Dorsolateral prefrontal cortex (tissue), 120 donors: ENCODE measurements at regions of chr5 and their contacts with region 1.

Region 1: DNA sequence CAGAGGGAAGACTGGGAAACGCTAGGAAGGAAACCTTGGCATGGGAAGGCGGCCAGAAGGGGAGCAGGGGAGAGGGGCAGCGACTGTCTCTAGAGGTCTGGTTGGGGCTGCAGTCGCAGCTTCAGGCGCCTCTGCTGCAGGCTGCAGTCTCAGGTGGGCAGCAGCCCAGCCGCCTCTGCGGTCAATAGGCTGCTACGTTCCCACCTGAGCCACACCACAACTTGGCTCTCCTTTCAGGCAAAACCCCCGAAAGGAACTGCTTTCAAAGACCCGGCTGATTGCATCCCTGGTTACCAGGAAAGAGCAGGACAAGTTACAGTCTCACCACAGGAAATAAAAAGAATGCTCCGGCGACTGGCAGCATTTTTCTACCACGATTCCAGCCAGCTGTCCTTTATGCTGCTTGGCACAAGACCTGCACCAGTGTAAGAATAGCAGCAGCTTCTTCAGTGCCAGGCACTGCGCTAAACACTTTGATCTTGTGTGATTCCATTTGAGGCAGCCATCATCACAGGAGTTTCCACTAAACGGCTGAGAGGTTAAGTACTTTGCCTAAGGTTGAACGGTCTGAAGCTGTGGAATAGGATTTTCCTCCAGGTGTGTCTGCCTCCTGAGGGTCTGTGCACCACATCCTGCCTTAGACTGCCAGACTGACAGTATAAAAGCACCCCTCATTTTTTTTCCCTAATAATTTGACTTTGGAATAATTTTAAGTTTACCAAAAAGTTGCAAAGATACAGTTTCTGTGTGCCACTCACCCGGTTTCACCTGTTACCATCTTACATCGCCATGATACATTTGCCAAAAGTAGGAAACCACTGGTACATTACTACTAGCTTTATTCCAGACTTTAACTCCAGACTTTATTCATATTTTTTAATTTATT is 7.5 kb downstream of the RPS14 start:
- DNase-seq: peak in 6 of 10 donors; percentile 17 to 76 (median 68)
- H3K4me3 ChIP-seq: no peak overlapping the region
- H3K27ac ChIP-seq: peak overlapping the region; percentile 8 to 90 (median 78)
- H3K27me3 ChIP-seq: no peaks in the 10 kb centered on the region
- CTCF ChIP-seq: no peak

Region 2: DNA sequence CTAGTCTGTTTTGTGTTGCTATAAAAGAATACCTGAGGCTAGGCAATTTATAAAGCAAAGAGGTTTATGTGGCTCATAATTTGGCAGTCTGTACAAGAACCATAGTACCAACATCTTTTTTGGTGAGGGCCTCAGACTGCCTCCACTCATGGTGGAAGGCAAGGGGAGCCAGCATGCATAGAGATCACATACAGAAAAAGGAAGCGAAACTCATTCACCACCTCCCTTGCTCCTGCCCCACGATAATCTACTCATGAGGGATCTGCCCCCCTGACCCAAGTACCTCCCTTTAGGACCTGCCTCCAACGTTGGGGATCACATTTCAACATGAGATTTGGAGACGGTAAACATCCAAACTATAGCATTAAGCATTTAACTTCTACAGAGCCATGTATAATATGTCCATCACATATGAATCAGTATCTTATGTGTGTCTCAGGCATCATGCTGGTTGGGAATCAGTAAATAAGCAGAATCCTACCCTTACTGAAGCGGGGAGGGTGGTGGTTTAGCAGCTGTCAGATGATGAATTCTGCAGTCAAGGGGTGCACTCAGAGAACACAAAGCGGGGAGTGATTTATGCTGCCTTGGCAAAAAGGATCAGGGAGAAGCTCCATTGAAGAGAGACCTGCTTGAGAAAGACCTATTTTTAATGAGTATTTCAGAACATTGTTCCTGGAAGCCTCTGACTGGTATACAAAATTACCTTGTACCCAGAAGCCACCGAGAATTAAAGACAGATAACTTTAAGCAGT is 406.7 kb before region 1 on chr5:
- intact Hi-C with region 1: no loop called
- DNase-seq: no peak
- H3K4me3 ChIP-seq: no peak overlapping the region
- H3K27ac ChIP-seq: no peak overlapping the region
- H3K27me3 ChIP-seq: no peaks in the 10 kb centered on the region
- CTCF ChIP-seq: no peak

Region 3: DNA sequence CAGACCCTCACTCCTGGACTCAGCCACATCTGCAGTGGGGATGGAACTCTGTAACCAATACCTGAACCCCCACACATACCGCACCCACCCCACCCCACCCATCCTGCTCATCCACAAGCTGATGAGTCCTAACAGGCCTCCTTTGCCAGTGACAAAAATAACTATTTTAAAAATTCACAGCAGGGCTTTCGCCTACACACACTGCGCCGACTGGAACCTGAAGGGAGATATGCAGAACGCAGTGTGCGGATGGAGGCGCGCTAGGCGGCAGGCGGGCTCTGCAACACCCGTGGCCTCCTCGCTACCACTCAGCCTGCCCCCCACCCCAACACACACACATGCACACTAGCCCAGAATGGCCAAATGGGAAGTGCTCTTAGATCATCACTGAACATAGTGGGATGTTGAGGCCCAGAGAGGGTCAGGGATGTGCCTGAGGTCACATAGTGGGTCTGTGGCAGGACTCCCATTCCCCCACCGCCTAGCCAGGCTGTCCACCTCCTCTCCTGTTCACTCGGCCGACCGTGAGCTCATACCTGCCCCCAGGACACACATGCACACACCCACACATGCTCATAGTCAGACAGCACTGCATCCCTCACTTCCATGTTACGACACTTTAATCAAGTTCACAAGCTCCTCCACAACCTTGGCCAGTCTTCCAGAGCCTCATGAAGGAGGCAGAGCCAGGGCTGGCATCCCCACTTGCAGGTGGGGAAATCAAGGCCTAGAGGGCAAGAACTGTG is 146.1 kb before region 1 on chr5:
- intact Hi-C with region 1: loop called in 1 of 2 experiments (anchors 2 kb)
- DNase-seq: peak in 7 of 10 donors; percentile 63 to 89 (median 80)
- H3K4me3 ChIP-seq: no peak overlapping the region
- H3K27ac ChIP-seq: peak overlapping the region in 55 of 59 donors; percentile 41 to 93 (median 84)
- H3K27me3 ChIP-seq: no peaks in the 10 kb centered on the region
- CTCF ChIP-seq: no peak

Region 4: GRCh38 chr5:150398722-150399523 is 43.1 kb before region 1 on chr5:
- intact Hi-C with region 1: loop called (anchors 2 to 5 kb)
- DNase-seq: no peak
- H3K4me3 ChIP-seq: no peak overlapping the region
- H3K27ac ChIP-seq: peak overlapping the region in 23 of 59 donors; percentile 1 to 89 (median 31)
- H3K27me3 ChIP-seq: no peaks in the 10 kb centered on the region
- CTCF ChIP-seq: peak in 12 of 56 donors; percentile 6 to 51 (median 24)